Tibial artery (tissue), 4 donors: ENCODE measurements at regions of chr15 and their contacts with region 1.

Region 1: GRCh38 chr15:91603384-91604080 is 250.0 kb upstream of the SLCO3A1 start:
- DNase-seq: no peak
- H3K4me3 ChIP-seq: no peak overlapping the region
- H3K27ac ChIP-seq: no peak overlapping the region
- H3K4me1 ChIP-seq: no peaks in the 10 kb centered on the region
- H3K27me3 ChIP-seq: no peaks in the 10 kb centered on the region
- CTCF ChIP-seq: no peak

Region 2: GRCh38 chr15:91548549-91548948 is 55.0 kb before region 1 on chr15:
- intact Hi-C with region 1: loop called (anchors 10 kb)
- DNase-seq: no peak
- H3K4me3 ChIP-seq: no peak overlapping the region
- H3K27ac ChIP-seq: no peak overlapping the region
- H3K4me1 ChIP-seq: no peaks in the 10 kb centered on the region
- H3K27me3 ChIP-seq: no peaks in the 10 kb centered on the region
- CTCF ChIP-seq: no peak